Activated CD4-positive, alpha-beta T cell treated with anti-CD3 and anti-CD28 coated beads, Interleukin-2, amount 10 ng/mL, durations not matched to agents 24 days and 14 days (primary cell): ENCODE measurements at regions of chr19 and their contacts with region 1.

Region 1: GRCh38 chr19:11435058-11435832 is at the starts of genes ODAD3 and PRKCSH:
- DNase-seq: peak; percentile 100
- H3K4me3 Mint-ChIP-seq: peak within 1 kb of the TSS; percentile 98
- H3K27ac Mint-ChIP-seq: peak within 1 kb of the TSS; percentile 95
- H3K4me1 Mint-ChIP-seq: peaks cover 17% of the 10 kb centered on the region
- H3K27me3 Mint-ChIP-seq: peaks cover 2% of the 10 kb centered on the region
- total RNA-seq, gene ODAD3: 0.12 and 0.24 TPM in 2 replicates
- total RNA-seq, gene PRKCSH: 288 TPM in 2 replicates

Region 2: GRCh38 chr19:11090054-11090900 is 345.0 kb before region 1 on chr19:
- intact Hi-C with region 1: loop called (anchors 1 kb)
- DNase-seq: peak; percentile 99
- H3K4me3 Mint-ChIP-seq: peak overlapping the region; percentile 97
- H3K27ac Mint-ChIP-seq: peak overlapping the region; percentile 100
- H3K4me1 Mint-ChIP-seq: peaks cover 36% of the 10 kb centered on the region
- H3K27me3 Mint-ChIP-seq: no peaks in the 10 kb centered on the region

Region 3: DNA sequence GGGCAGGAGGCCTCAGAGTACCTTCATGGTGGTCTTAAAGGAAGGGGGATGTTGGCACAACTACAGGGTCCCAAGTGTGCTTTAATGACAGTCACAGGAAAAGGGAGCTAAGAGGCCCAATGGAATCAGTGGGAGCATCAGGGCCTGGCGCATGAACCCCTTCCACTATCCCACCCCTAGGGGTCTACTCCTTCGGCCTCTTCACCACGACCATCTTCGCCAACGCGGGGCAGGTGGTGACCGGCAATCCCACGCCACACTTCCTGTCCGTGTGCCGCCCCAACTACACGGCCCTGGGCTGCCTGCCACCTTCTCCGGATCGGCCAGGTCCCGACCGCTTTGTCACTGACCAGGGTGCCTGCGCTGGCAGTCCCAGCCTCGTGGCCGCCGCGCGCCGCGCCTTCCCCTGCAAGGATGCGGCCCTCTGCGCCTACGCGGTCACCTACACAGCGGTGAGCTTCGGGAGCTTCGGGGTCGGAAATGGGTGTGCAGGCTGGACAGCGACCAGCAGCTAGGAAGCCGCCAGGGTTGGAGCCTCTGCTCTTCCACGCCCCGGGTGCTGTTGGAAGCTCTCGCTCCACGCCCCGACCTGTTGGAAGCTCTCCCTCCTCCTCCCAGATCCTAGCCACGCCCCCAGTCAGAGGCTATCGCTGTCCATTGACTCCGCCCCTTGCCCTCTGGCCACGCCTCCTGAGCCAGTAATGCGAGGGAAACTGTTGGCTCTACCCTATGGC is 74.0 kb before region 1 on chr19:
- intact Hi-C with region 1: no loop called
- DNase-seq: peak; percentile 66
- H3K4me3 Mint-ChIP-seq: no peak overlapping the region
- H3K27ac Mint-ChIP-seq: no peak overlapping the region
- H3K4me1 Mint-ChIP-seq: peaks cover under 1% of the 10 kb centered on the region
- H3K27me3 Mint-ChIP-seq: peaks cover 5% of the 10 kb centered on the region

Region 4: DNA sequence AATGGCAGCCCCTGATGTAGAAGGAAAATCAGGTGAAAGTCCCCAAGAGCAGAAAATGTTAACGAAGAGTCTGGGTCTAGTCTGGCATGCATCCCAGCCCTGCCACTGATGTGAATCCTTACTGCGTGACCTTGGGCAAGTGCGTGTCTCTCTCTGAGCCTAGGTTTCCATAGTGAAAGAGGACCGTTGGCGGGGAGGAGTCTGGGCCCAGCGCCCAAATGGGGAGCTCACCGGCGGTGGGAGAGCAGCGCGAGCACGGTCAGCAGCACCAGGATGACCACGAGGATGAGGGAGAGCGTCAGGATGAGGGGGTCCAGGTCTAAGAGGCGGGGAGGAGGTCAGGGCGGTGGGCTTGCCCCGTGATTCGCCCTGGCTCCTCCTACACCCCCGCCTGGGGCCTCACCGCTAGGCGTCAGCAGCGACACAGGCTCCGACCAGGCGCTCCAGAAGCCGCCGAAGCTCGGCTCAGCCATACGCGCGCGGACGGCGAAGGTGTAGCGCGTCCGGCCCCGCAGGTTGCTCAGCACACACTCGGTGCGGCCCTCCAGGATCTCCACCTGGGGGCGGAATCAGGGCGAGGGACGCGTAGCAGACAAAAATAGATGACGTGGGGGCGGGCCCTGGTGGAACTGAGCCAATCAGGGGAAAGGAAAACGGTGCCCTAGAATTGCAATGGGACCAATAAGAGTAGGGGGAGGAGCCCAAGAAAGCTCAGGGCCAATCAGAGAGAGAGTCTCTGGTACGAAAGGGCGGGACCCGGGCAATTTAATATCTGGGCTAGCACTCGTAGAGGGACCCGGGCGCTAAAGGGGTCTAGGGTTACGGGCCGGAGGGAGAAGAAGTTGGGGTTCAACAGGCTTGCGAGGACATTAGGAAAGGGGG is 54.4 kb before region 1 on chr19:
- intact Hi-C with region 1: loop called (anchors 1 kb)
- DNase-seq: peak; percentile 99
- H3K4me3 Mint-ChIP-seq: peak overlapping the region; percentile 87
- H3K27ac Mint-ChIP-seq: peak overlapping the region; percentile 99
- H3K4me1 Mint-ChIP-seq: peaks cover 42% of the 10 kb centered on the region
- H3K27me3 Mint-ChIP-seq: peaks cover 14% of the 10 kb centered on the region

Region 5: DNA sequence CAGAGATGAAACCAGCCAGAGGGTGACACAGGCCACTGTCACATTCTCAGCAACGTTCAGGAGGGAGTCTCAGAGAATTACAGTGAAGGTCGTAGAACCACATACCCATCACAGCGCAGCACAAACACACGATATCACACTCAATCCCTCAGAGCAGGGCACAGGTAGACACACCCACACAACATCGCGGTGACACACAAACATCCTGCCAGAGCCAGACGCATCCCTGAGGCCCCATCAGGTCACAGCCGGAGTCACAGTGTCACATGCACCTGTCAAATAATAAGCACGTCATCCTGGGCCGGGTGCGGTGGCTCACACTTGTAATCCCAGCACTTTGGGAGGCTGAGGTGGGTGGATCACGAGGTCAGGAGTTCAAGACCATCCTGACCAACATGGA is 28.1 kb after region 1 on chr19:
- intact Hi-C with region 1: no loop called
- DNase-seq: no peak
- H3K4me3 Mint-ChIP-seq: no peak overlapping the region
- H3K27ac Mint-ChIP-seq: no peak overlapping the region
- H3K4me1 Mint-ChIP-seq: no peaks in the 10 kb centered on the region
- H3K27me3 Mint-ChIP-seq: peaks cover 3% of the 10 kb centered on the region

Region 6: DNA sequence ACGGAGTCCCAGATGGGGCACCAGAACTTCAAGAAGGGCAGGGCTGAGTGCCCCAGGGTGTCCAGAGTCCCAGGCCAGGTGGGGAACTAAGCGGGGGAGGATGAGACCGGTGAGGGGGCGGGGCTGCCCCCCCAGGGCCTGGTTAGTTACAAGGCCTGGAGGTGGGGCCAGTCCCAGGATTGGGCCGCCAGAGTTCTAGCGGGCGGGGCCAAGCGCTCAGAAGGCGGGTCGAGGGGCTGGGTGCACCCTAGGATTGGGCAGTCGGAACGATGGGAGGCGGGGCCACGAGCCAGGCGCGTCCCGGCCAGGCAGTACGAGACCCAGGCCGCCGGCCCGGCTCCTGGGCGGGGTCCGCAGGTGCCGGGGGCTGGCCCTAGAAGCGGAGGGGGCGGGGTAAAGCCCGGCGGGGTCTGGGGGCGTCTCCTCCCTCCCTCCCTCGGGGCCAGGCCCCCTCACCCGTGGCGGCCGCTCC is 69.8 kb after region 1 on chr19:
- intact Hi-C with region 1: loop called (anchors 1 kb)
- DNase-seq: peak; percentile 99
- H3K4me3 Mint-ChIP-seq: peak overlapping the region; percentile 92
- H3K27ac Mint-ChIP-seq: peak overlapping the region; percentile 97
- H3K4me1 Mint-ChIP-seq: peaks cover 20% of the 10 kb centered on the region
- H3K27me3 Mint-ChIP-seq: no peaks in the 10 kb centered on the region

Region 7: GRCh38 chr19:11558881-11559828 is 123.9 kb after region 1 on chr19 and contains the start of gene ELOF1:
- intact Hi-C with region 1: loop called (anchors 1 kb)
- DNase-seq: peak; percentile 99
- H3K4me3 Mint-ChIP-seq: peak within 1 kb of the TSS; percentile 95
- H3K27ac Mint-ChIP-seq: peak within 1 kb of the TSS; percentile 96
- H3K4me1 Mint-ChIP-seq: peaks cover 42% of the 10 kb centered on the region
- H3K27me3 Mint-ChIP-seq: no peaks in the 10 kb centered on the region
- total RNA-seq, gene ELOF1: 71.9 and 74.2 TPM in 2 replicates

Region 8: DNA sequence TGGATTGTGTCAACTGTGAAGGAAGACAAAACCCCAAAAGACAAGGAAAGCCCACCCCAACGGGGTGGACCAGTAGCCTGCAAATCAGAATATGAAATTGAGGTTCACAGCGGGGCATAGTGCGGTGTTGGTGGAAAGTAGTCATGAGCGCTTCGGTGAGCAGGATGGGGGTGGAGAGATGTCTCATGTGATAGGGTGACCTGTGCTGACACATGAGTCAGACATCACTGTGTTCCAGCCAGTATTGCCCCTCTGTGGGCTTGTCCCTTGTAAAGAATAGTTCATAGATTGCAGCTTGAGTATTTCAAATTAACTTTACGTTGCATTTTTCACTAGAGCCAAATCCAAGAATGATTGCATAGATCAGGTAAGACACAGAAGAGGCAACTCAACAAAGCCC is 459.6 kb after region 1 on chr19:
- intact Hi-C with region 1: no loop called
- DNase-seq: no peak
- H3K4me3 Mint-ChIP-seq: no peak overlapping the region
- H3K27ac Mint-ChIP-seq: no peak overlapping the region
- H3K4me1 Mint-ChIP-seq: no peaks in the 10 kb centered on the region
- H3K27me3 Mint-ChIP-seq: no peaks in the 10 kb centered on the region